Mucosa of descending colon (tissue), 3 donors: ENCODE measurements at regions of chr6 and their contacts with region 1.

Region 1: GRCh38 chr6:110179401-110180227 is at the start of gene WASF1:
- DNase-seq: peak; percentile 95 to 96 (median 95)
- ATAC-seq: peak; percentile 99
- H3K4me3 ChIP-seq: peak within 1 kb of the TSS; percentile 62
- H3K4me1 ChIP-seq: peaks cover 21% of the 10 kb centered on the region
- CTCF ChIP-seq: no peak
- total RNA-seq, gene WASF1: 1.3 to 16.0 (median 2.7) TPM

Region 2: DNA sequence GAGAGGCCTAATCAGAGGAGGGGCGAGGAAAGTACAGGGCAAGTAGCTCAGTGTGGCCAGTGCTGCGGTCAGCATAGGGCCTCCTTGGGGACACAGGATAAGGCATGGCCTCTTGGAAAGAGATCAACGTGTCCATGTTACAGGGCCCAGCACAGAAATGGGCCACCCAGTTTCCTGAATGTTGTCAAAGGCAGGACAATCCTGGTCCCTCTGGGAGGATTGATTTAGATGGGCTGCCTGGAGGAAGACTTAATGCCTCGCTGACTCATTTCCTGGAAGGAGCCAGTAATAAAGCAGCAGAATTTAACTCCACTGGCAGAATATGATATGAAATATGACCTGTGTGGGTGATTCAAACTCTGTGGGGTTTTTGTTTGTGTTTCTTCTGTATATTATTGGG is 219.2 kb after region 1 on chr6:
- intact Hi-C with region 1: loop called (anchors 10 kb)
- DNase-seq: no peak
- ATAC-seq: no peak
- H3K4me3 ChIP-seq: no peak overlapping the region
- H3K4me1 ChIP-seq: no peaks in the 10 kb centered on the region
- CTCF ChIP-seq: no peak